GM10248 (cell line): ENCODE measurements at regions of chr6 and their contacts with region 1.

Region 1: GRCh38 chr6:44338228-44339122 is 4.0 kb upstream of the SPATS1 start:
- DNase-seq: peak; percentile 77
- CTCF ChIP-seq: peak; percentile 84

Region 2: GRCh38 chr6:44201638-44202303 is 136.7 kb before region 1 on chr6:
- CTCF ChIA-PET with region 1: no interaction called
- POLR2A ChIA-PET with region 1: no interaction called
- DNase-seq: no peak
- CTCF ChIP-seq: no peak

Region 3: GRCh38 chr6:44265007-44265721 is 73.3 kb before region 1 on chr6 and contains the start of gene NFKBIE:
- CTCF ChIA-PET with region 1: interaction called, 142 read pairs
- POLR2A ChIA-PET with region 1: no interaction called
- DNase-seq: peak; percentile 94
- CTCF ChIP-seq: peak; percentile 73

Region 4: GRCh38 chr6:44297063-44298038 is 41.1 kb before region 1 on chr6:
- CTCF ChIA-PET with region 1: interaction called, 15 read pairs
- POLR2A ChIA-PET with region 1: interaction called, 6 read pairs
- DNase-seq: peak; percentile 41
- CTCF ChIP-seq: no peak

Region 5: GRCh38 chr6:44312901-44313788 is 25.3 kb before region 1 on chr6 and contains the start of gene AARS2:
- CTCF ChIA-PET with region 1: interaction called, 31 read pairs
- POLR2A ChIA-PET with region 1: no interaction called
- DNase-seq: peak; percentile 91
- CTCF ChIP-seq: peak; percentile 95